Mammary epithelial cell (primary cell): ENCODE measurements at regions of chr4 and their contacts with region 1.

Region 1: DNA sequence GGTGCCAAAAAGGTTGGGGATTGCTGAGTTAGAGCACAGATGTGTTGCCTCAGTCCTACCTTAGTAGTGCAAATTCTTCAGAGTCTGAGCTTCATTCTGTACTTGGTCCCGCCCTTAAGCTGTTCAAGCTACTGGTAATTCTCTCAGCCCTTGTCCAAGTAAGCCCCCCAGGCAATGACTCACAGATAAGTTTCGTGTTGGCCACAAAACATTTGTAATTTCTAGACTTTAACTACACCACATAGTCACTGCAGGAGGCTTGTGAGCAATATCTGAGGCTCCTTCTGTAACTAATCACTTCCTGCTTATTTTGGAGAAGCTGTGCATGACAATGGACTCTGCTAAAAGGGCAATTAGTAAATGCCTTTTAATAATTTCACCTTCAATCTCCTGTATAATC is 1420.5 kb downstream of the PCDH7 start:
- DNase-seq: peak; percentile 97
- H3K4me3 ChIP-seq: peak overlapping the region in 1 of 3 experiments; percentile 18
- H3K27ac ChIP-seq: peak overlapping the region; percentile 39
- H3K4me1 ChIP-seq: peaks cover 32% of the 10 kb centered on the region
- H3K27me3 ChIP-seq: no peaks in the 10 kb centered on the region
- CTCF ChIP-seq: no peak

Region 2: GRCh38 chr4:32106767-32107166 is 33.9 kb before region 1 on chr4:
- CTCF ChIA-PET with region 1: no interaction called
- dilution Hi-C with region 1: no loop called
- in situ Hi-C with region 1: no loop called
- intact Hi-C with region 1: loop called (anchors 1 kb)
- DNase-seq: peak; percentile 71
- H3K4me3 ChIP-seq: no peak overlapping the region
- H3K27ac ChIP-seq: no peak overlapping the region
- H3K4me1 ChIP-seq: peaks cover 10% of the 10 kb centered on the region
- H3K27me3 ChIP-seq: no peaks in the 10 kb centered on the region
- CTCF ChIP-seq: no peak

Region 3: DNA sequence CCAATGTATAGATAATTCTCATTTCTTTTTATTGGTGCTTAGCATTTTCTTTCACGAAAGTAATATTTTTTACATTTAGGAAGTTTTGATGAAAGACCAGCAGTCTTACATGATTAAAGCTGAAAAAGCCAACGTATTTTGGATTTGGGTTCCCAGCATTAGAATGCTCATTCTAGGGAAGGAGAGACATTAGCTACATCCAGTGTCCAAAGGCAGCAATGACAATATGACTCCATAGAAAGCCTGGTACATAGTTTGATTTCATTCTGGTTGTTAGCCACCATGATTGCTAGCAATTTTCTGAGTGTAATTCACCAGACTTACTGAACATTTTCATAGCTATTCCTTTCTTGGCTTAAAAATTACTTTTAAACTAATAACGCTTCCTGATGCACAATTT is 22.9 kb before region 1 on chr4:
- CTCF ChIA-PET with region 1: interaction called, 12 read pairs
- dilution Hi-C with region 1: no loop called
- in situ Hi-C with region 1: no loop called
- intact Hi-C with region 1: no loop called
- DNase-seq: no peak
- H3K4me3 ChIP-seq: no peak overlapping the region
- H3K27ac ChIP-seq: no peak overlapping the region
- H3K4me1 ChIP-seq: peaks cover 4% of the 10 kb centered on the region
- H3K27me3 ChIP-seq: no peaks in the 10 kb centered on the region
- CTCF ChIP-seq: peak; percentile 7 to 49

Region 4: GRCh38 chr4:32172761-32173160 is 32.1 kb after region 1 on chr4:
- CTCF ChIA-PET with region 1: no interaction called
- dilution Hi-C with region 1: no loop called
- in situ Hi-C with region 1: no loop called
- intact Hi-C with region 1: loop called (anchors 1 kb)
- DNase-seq: peak; percentile 81
- H3K4me3 ChIP-seq: no peak overlapping the region
- H3K27ac ChIP-seq: peak overlapping the region; percentile 70
- H3K4me1 ChIP-seq: peaks cover 23% of the 10 kb centered on the region
- H3K27me3 ChIP-seq: no peaks in the 10 kb centered on the region
- CTCF ChIP-seq: no peak

Region 5: DNA sequence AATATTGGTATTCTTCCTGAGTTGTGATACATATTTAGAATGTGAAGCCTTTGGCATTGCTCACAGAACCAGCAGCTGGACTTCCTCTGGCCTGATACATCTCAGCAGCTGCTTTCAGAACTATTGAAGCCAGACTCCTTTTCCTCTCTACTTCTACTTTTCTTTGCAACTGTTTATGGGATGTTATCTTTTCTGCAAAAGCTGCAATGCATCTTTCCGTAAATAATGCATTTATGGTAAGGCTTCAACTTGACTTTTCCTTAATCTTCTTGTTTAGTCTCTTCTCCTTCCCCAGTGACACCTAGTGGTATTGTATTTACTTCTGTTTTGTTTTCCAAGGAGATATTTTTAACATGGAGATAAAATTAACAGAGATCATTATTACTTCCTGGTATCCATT is 128.2 kb after region 1 on chr4:
- CTCF ChIA-PET with region 1: no interaction called
- dilution Hi-C with region 1: no loop called
- in situ Hi-C with region 1: no loop called
- intact Hi-C with region 1: loop called (anchors 5 kb)
- DNase-seq: peak; percentile 4
- H3K4me3 ChIP-seq: no peak overlapping the region
- H3K27ac ChIP-seq: no peak overlapping the region
- H3K4me1 ChIP-seq: no peaks in the 10 kb centered on the region
- H3K27me3 ChIP-seq: no peaks in the 10 kb centered on the region
- CTCF ChIP-seq: peak; percentile 19 to 45